Activated CD8-positive, alpha-beta T cell treated with anti-CD3 and anti-CD28 coated beads, Interleukin-2, amount 10 ng/mL, durations not matched to agents 7 days and 5 days (primary cell): ENCODE measurements at regions of chr12 and their contacts with region 1.

Region 1: GRCh38 chr12:106357549-106358395 is at the start of gene POLR3B:
- DNase-seq: peak; percentile 97
- ATAC-seq: peak; percentile 93
- H3K4me3 Mint-ChIP-seq: peak within 1 kb of the TSS; percentile 89
- H3K27ac Mint-ChIP-seq: peak within 1 kb of the TSS; percentile 91
- H3K4me1 Mint-ChIP-seq: peaks cover 16% of the 10 kb centered on the region
- H3K27me3 Mint-ChIP-seq: no peaks in the 10 kb centered on the region
- total RNA-seq, gene POLR3B: 5.4 to 6.6 TPM

Region 2: DNA sequence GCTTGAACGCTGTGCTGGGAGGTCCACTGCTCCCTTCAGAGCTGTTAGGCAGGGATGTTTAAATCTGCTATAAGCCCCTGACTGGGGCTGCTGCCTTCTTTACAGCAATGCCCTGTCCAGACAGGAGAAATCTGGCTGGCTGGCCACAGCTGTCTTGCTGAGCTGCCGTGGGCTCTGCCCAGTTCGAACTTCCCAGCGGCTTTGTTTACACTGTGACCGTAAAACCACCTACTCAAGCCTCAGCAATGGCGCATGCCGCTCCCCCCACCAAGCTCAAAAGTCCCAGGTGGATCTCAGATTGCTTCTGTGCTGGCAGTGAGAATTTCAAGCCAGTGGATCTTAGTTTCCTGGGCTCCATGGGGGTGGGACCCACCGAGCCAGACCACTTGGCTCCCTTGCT is 145.8 kb before region 1 on chr12:
- CTCF ChIA-PET with region 1: no interaction called
- POLR2A ChIA-PET with region 1: no interaction called
- DNase-seq: no peak
- ATAC-seq: no peak
- H3K4me3 Mint-ChIP-seq: no peak overlapping the region
- H3K27ac Mint-ChIP-seq: no peak overlapping the region
- H3K4me1 Mint-ChIP-seq: no peaks in the 10 kb centered on the region
- H3K27me3 Mint-ChIP-seq: peaks cover 32% of the 10 kb centered on the region

Region 3: GRCh38 chr12:106239241-106239950 is 118.4 kb before region 1 on chr12:
- CTCF ChIA-PET with region 1: no interaction called
- POLR2A ChIA-PET with region 1: no interaction called
- DNase-seq: no peak
- ATAC-seq: no peak
- H3K4me3 Mint-ChIP-seq: no peak overlapping the region
- H3K27ac Mint-ChIP-seq: no peak overlapping the region
- H3K4me1 Mint-ChIP-seq: no peaks in the 10 kb centered on the region
- H3K27me3 Mint-ChIP-seq: peaks cover 3% of the 10 kb centered on the region

Region 4: DNA sequence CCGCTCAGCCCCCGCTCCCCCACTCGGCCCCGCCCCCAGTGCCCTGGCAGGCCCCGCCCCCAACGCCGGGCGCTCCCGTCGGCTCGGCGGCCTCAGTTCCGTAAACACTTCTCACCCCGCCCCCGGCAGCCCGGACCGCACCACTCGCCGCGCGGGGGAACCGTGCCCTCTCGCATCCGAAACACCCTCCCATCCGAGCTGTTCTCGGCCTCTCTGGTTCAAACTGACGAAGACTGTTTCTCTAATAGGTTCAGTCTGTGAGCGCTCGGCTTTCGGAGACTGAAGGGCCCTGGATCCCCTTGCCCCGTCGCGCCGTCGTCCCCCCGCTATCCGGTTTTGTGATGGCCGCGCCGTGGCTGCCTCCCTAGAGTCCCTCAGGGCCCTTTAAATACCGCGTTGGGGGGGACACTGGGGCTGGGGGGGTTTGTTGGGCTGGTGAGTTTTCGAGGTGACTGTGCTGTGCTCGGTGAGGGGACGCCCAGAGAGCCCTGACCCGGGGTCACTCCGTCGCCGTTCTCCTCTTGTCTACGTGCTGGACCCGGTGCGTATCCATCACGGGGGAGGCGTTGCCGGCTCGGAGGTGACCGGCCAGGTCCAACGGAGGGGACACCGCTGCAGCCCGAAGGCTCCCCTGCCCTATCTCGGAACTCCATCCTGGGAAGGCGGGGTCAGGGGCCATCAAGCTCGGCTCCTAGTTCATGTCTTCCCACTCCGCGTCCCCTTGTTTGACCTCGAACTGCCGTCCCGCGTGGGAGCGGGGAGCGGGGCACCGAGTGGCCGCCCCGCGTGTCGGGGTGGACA is 55.2 kb before region 1 on chr12 and contains the start of gene TCP11L2:
- CTCF ChIA-PET with region 1: interaction called, 11 read pairs
- POLR2A ChIA-PET with region 1: interaction called, 6 read pairs
- DNase-seq: peak; percentile 91
- ATAC-seq: peak; percentile 75
- H3K4me3 Mint-ChIP-seq: peak within 1 kb of the TSS; percentile 87
- H3K27ac Mint-ChIP-seq: peak within 1 kb of the TSS; percentile 100
- H3K4me1 Mint-ChIP-seq: peaks cover 32% of the 10 kb centered on the region
- H3K27me3 Mint-ChIP-seq: no peaks in the 10 kb centered on the region
- total RNA-seq, gene TCP11L2: 5.9 to 6.4 TPM

Region 5: DNA sequence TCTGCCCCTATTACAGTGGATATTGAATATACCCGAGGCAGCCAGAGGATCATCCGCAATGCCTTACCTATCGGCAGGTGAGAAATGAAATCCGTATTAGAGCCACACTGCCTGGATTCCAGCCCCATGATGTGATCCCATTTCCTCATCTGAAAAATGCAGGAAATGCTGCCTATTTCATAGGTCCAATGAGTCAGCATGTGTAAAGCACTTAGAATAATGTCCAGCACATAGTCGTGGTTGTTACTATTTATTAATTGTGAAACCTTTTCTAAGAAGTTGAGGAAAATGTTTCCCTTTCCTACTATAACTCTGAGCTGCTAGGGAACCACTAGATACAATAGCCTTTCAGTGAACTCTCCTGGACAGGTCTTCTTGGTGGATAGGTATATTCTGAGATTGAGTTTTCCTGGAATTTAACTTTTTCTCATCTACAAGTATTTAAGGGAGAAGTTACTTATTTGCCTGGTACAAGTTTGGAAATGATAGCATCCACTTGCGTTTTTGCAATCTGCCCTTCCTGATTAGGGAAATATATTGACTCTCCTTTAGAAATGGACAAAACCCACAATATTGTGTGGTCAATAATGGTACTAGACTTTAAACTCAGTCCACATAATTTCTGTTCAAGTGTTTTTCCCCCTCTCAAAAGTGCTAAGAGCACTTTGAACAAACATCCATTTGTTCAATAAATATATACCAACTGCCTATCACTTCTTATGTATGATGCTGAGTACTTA is 12.0 kb after region 1 on chr12:
- CTCF ChIA-PET with region 1: interaction called, 13 read pairs
- POLR2A ChIA-PET with region 1: no interaction called
- DNase-seq: no peak
- ATAC-seq: no peak
- H3K4me3 Mint-ChIP-seq: no peak overlapping the region
- H3K27ac Mint-ChIP-seq: no peak overlapping the region
- H3K4me1 Mint-ChIP-seq: no peaks in the 10 kb centered on the region
- H3K27me3 Mint-ChIP-seq: no peaks in the 10 kb centered on the region

Region 6: DNA sequence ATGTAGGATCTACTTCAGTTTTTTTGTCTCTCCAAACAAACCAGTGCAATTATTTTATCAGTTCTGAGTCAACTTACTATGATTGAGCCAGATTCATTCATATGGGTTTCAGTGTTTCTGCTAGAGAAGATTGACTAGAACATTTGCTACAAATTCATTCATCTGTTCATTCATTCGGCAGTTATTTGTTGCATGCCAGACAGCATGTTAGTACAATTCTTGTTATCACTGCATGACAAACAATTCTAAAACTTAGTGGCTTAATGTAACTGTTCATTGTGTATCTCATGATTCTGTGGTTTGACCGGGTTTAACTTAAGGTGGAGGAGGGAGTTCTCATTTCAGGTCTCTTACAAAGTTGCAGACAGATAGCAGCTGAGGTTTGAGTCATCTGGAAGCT is 52.1 kb after region 1 on chr12:
- CTCF ChIA-PET with region 1: no interaction called
- POLR2A ChIA-PET with region 1: no interaction called
- DNase-seq: no peak
- ATAC-seq: no peak
- H3K4me3 Mint-ChIP-seq: no peak overlapping the region
- H3K27ac Mint-ChIP-seq: no peak overlapping the region
- H3K4me1 Mint-ChIP-seq: no peaks in the 10 kb centered on the region
- H3K27me3 Mint-ChIP-seq: no peaks in the 10 kb centered on the region

Region 7: DNA sequence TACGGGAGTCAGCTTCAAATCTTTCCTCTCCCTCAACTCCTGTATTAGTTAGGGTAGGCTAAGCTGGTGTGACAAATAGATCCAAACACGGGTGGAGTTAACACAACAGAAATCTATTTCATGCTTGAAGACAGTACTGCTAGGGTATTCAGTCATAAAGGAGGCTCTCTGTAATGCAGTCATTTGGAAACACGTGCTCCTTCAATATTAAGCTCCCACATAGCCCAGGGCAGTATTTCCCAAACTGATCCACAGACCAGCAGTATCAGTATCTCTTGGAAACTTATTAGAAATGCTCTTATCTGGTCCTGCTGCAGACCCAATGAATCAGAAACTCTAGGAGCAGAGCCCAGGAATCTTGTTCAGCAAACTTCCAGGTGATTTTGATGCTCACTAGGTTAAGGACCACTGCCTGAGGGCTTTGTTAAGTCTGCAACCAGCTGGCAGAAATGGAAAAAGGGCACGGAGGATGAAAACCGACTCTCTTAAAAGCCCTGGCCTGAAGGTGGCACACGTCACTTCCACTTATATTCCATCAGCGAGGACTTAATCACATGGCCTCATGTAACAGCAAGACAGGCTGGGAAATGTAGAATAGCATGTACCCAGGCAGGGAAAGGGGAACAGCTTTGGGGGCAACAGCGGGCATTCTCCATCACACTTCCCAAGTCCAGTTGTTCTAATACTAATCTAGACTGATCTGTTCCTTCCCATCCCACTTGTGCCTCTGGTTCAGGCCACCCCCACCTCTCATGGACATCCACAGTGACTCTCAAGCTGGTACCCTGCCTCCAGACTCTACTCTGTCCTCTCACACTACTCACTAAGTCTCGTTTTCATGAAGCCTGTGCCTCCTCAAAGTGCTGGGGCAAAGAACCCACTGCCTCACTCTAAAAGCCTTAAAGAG is 378.5 kb after region 1 on chr12:
- CTCF ChIA-PET with region 1: no interaction called
- POLR2A ChIA-PET with region 1: no interaction called
- DNase-seq: peak; percentile 27
- ATAC-seq: no peak
- H3K4me3 Mint-ChIP-seq: no peak overlapping the region
- H3K27ac Mint-ChIP-seq: no peak overlapping the region
- H3K4me1 Mint-ChIP-seq: no peaks in the 10 kb centered on the region
- H3K27me3 Mint-ChIP-seq: peaks cover 6% of the 10 kb centered on the region

Region 8: DNA sequence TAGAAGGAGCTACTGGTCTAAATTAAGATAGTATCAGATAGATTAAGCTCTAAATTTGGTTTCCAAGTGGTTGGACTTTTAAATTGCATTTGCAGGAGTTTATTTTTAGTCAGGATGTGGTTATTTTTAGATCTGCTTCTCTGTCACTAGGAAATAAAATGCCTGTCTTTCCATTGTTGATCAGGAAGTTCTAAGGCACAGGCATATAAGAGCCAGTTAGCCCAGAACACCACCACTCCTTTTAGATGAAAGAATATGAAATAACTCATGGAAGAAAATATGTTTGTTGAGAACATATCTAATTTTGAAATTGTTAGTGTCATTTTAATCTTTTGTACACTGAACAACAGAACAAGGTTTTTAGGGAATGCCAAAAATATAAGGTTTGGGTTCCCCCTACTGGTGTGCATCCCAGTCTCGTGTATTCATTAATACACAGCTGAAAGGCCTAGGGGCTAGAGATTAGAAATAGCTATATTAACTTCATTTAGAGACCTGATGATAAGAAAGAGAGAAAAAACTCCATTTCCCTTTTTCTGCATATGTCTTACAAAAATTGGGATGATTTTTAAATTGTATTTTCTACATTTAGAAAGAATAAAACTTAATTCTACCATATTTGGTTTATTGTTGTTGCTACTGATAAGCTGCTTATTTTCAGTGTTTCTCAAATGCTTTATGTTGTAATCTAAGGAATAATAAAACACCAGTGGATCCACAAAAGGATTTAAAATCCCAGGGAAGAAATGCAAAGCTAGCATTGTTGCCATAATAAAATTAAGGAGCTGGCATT is 483.9 kb after region 1 on chr12:
- CTCF ChIA-PET with region 1: interaction called, 16 read pairs
- POLR2A ChIA-PET with region 1: no interaction called
- DNase-seq: peak; percentile 41
- ATAC-seq: no peak
- H3K4me3 Mint-ChIP-seq: no peak overlapping the region
- H3K27ac Mint-ChIP-seq: no peak overlapping the region
- H3K4me1 Mint-ChIP-seq: peaks cover 17% of the 10 kb centered on the region
- H3K27me3 Mint-ChIP-seq: no peaks in the 10 kb centered on the region